Activated naive CD4-positive, alpha-beta T cell treated with anti-CD3 and anti-CD28 coated beads for 36 hours (primary cell): ENCODE measurements at regions of chr7 and their contacts with region 1.

Region 1: DNA sequence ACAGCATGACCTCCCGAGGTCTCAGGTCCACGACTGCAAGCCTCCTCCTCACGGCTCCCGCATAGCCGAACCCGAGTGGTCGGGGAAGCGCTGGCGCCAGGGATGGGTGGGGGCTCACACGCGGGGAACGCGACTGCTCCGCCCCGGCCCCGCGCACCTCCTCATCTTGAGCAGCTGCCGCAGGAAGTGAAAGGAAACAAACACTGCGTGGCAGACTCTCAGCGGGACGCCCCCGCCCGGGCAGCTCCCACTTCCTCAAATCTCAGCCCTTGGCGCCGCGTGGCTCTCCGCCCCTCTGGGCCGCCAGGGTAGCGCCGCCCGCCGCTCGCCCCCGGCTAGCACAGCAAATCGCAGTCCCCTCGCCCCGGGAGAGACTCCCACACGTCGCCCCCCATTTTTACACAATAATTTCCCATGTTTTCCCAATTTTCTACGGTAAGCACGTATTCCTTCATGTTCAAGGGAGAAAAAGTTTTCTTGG is at the start of gene TMEM243:
- DNase-seq: peak; percentile 88
- H3K4me3 Mint-ChIP-seq: peak within 1 kb of the TSS; percentile 98
- H3K27ac Mint-ChIP-seq: peak within 1 kb of the TSS; percentile 97
- H3K4me1 Mint-ChIP-seq: peaks cover 28% of the 10 kb centered on the region
- H3K27me3 Mint-ChIP-seq: peaks cover 6% of the 10 kb centered on the region
- total RNA-seq, gene TMEM243: 50.4 to 53.1 TPM

Region 2: GRCh38 chr7:86978808-86979506 is 240.6 kb before region 1 on chr7:
- CTCF ChIA-PET with region 1: no interaction called
- intact Hi-C with region 1: loop called (anchors 1 kb)
- DNase-seq: peak; percentile 13
- H3K4me3 Mint-ChIP-seq: no peak overlapping the region
- H3K27ac Mint-ChIP-seq: peak overlapping the region; percentile 19
- H3K4me1 Mint-ChIP-seq: peaks cover 33% of the 10 kb centered on the region
- H3K27me3 Mint-ChIP-seq: no peaks in the 10 kb centered on the region

Region 3: DNA sequence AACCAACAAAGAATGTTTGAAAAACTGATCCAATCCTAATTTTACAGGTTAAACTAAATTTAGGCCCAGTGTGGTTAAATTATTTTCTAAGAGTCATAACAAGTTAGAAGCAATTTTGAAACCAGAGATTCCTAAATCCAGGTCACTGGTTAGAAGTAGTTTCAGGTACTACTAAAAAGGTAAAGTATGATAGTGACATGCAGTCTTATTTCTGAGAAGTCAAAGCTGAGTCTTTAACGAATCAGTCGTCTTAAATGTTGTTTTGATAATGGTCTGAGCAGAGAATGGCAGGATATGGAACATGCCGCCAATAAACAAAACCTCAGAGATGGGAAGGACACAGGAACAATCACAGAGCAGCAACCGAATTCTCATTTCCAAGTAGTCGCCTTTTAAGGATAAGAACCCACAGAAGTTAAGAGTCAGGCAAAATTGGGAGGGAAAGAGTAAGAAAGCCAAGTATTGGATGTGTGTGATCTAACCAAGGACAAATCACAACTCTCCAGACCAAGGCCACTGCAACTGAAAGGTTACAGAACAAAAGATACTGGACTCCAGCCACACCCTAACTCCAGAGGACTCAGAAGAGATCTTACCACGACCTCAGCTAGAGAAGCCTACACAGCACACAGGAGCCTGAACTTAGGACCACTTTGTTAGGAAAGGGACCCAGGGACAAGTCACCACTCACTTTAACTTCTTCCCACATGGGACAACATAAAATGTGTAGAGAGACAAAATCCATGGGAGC is 19.7 kb before region 1 on chr7:
- CTCF ChIA-PET with region 1: interaction called, 3 read pairs
- intact Hi-C with region 1: loop called (anchors 1 kb)
- DNase-seq: no peak
- H3K4me3 Mint-ChIP-seq: no peak overlapping the region
- H3K27ac Mint-ChIP-seq: peak overlapping the region; percentile 86
- H3K4me1 Mint-ChIP-seq: peaks cover 61% of the 10 kb centered on the region
- H3K27me3 Mint-ChIP-seq: no peaks in the 10 kb centered on the region

Region 4: GRCh38 chr7:87231256-87231655 is 11.7 kb after region 1 on chr7:
- CTCF ChIA-PET with region 1: interaction called, 10 read pairs
- intact Hi-C with region 1: no loop called
- DNase-seq: no peak
- H3K4me3 Mint-ChIP-seq: no peak overlapping the region
- H3K27ac Mint-ChIP-seq: no peak overlapping the region
- H3K4me1 Mint-ChIP-seq: peaks cover 11% of the 10 kb centered on the region
- H3K27me3 Mint-ChIP-seq: no peaks in the 10 kb centered on the region

Region 5: GRCh38 chr7:87628780-87629569 is 409.4 kb after region 1 on chr7:
- CTCF ChIA-PET with region 1: no interaction called
- intact Hi-C with region 1: loop called (anchors 5 kb)
- DNase-seq: peak; percentile 33
- H3K4me3 Mint-ChIP-seq: peak overlapping the region; percentile 75
- H3K27ac Mint-ChIP-seq: no peak overlapping the region
- H3K4me1 Mint-ChIP-seq: peaks cover 7% of the 10 kb centered on the region
- H3K27me3 Mint-ChIP-seq: peaks cover 6% of the 10 kb centered on the region

Region 6: DNA sequence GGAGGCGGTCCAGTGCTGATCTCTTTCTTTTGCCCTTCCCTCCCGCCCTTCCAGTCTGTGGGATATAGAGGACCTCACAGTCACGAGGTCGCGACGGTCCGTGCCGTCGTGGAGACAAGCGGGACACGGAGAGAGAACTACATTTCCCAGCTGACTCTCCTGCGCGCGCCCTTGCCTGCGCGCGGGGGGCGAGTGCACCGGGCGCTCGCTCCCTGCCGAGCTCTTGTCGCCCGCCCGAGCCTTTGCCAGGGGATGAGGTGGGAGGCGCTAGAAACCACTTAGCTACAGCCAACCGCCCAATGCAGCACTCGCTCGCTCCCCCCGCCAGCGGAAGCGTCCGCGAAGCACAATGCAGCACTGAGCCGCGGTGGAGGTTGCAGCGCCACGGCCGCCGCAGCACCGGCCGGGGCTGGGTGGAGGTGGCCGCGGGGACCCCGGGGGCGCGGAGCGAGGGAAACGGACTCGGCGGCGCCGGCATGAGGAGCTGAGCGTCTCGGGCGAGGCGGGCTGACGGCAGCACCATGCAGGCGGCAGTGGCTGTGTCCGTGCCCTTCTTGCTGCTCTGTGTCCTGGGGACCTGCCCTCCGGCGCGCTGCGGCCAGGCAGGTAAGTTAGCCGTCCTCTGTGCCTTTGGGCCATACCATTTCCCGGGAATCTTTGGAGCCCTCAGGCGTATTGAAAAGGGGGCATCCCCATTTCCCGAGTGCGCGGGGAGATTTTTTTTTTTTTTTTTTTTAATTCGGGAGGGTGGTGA is 714.5 kb after region 1 on chr7 and contains the start of gene ADAM22:
- CTCF ChIA-PET with region 1: no interaction called
- intact Hi-C with region 1: loop called (anchors 5 kb)
- DNase-seq: peak; percentile 85
- H3K4me3 Mint-ChIP-seq: peak within 1 kb of the TSS; percentile 84
- H3K27ac Mint-ChIP-seq: no peak within 1 kb of the TSS
- H3K4me1 Mint-ChIP-seq: peaks cover 10% of the 10 kb centered on the region
- H3K27me3 Mint-ChIP-seq: peaks cover 7% of the 10 kb centered on the region
- total RNA-seq, gene ADAM22: 1.2 to 1.9 TPM

Region 7: GRCh38 chr7:88001744-88002530 is 782.4 kb after region 1 on chr7:
- CTCF ChIA-PET with region 1: no interaction called
- intact Hi-C with region 1: no loop called
- DNase-seq: no peak
- H3K4me3 Mint-ChIP-seq: no peak overlapping the region
- H3K27ac Mint-ChIP-seq: no peak overlapping the region
- H3K4me1 Mint-ChIP-seq: no peaks in the 10 kb centered on the region
- H3K27me3 Mint-ChIP-seq: no peaks in the 10 kb centered on the region